ENCODE measurements at regions of chr12 and their contacts with region 1.

Region 1: GRCh38 chr12:90854136-90854689 is 100.8 kb downstream of the CCER1 start:
- DNase-seq: peak; percentile 31
- H3K4me3 ChIP-seq: no peak overlapping the region
- H3K27ac ChIP-seq: no peak overlapping the region
- H3K4me1 ChIP-seq: no peaks in the 10 kb centered on the region
- H3K27me3 ChIP-seq: no peaks in the 10 kb centered on the region
- CTCF ChIP-seq: peak; percentile 70

Region 2: GRCh38 chr12:90274407-90274806 is 579.8 kb before region 1 on chr12:
- intact Hi-C with region 1: loop called (anchors 10 kb)
- DNase-seq: no peak
- H3K4me3 ChIP-seq: no peak overlapping the region
- H3K27ac ChIP-seq: no peak overlapping the region
- H3K4me1 ChIP-seq: no peaks in the 10 kb centered on the region
- H3K27me3 ChIP-seq: no peaks in the 10 kb centered on the region
- CTCF ChIP-seq: no peak

Region 3: GRCh38 chr12:90652280-90652679 is 201.9 kb before region 1 on chr12:
- intact Hi-C with region 1: no loop called
- DNase-seq: no peak
- H3K4me3 ChIP-seq: no peak overlapping the region
- H3K27ac ChIP-seq: no peak overlapping the region
- H3K4me1 ChIP-seq: no peaks in the 10 kb centered on the region
- H3K27me3 ChIP-seq: no peaks in the 10 kb centered on the region
- CTCF ChIP-seq: no peak

Region 4: DNA sequence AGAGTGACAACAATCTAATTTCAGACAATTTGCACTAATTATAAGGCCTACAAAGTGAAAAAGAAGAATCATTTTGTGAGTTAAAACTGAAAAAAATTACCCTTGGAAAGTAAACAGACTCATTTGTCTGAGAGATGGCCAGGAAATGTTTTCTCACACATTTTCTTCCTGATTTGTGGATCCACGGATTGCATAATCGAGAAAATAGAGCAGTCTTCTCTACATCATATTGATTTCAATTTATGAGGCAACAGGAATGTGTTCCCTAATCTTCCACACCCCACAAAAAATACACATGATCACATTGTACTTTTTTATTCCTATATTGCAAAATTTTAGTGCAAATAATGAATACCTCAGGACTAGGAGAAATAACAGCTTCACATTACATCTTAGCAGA is 60.0 kb before region 1 on chr12:
- intact Hi-C with region 1: no loop called
- DNase-seq: no peak
- H3K4me3 ChIP-seq: no peak overlapping the region
- H3K27ac ChIP-seq: no peak overlapping the region
- H3K4me1 ChIP-seq: no peaks in the 10 kb centered on the region
- H3K27me3 ChIP-seq: no peaks in the 10 kb centered on the region
- CTCF ChIP-seq: no peak